ENCODE measurements at regions of chr19 and their contacts with region 1.

Region 1: DNA sequence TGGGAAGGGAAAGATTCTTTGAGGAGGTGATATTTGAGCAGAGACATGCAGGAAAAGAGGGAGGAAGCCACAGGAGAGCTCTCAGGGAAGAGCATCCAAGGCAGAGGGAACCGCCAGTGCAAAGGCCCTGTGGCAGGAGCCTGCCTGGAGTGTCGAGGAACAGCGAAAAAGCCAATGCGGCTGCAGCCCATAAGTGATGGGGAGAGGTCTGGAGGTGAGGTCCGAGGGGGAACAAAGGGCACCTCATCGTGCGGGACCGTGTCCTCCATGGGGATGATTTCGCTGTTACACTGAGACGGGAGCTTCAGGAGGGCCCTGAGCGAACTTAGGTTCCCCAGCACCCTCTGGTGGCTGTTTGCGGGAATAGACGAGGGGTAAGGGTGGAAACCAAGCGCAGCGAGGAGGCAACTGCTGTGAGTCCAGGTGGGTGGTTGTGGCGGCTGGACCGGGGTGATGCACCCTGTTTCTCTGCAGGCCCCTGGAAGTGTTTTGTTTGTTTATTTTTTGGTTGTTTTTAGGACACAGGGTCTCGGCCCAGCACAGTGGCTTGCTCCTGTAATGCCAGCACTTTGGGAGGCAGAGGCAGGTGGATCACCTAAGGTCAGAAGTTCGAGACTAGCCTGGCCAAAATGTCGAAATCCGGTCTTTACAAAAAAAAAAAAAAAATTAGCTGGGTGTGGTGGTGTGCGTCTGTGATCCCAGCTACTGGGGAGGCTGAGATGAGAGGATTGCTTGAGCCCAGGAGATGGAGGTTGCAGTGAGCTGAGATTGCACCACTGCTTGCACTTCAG is 5.9 kb upstream of the EHD2 start:
- DNase-seq: peak; percentile 71 to 89 (median 81)
- H3K4me3 ChIP-seq: no peak overlapping the region
- H3K27ac ChIP-seq: no peak overlapping the region
- H3K4me1 ChIP-seq: no peaks in the 10 kb centered on the region
- H3K27me3 ChIP-seq: no peaks in the 10 kb centered on the region
- CTCF ChIP-seq: peak; percentile 67 to 89 (median 82)
- POLR2A ChIP-seq: no peak

Region 2: GRCh38 chr19:47531640-47532387 is 175.5 kb before region 1 on chr19:
- intact Hi-C with region 1: loop called in 1 of 2 experiments (anchors 10 kb)
- DNase-seq: no peak
- H3K4me3 ChIP-seq: no peak overlapping the region
- H3K27ac ChIP-seq: no peak overlapping the region
- H3K4me1 ChIP-seq: no peaks in the 10 kb centered on the region
- H3K27me3 ChIP-seq: no peaks in the 10 kb centered on the region
- CTCF ChIP-seq: no peak
- POLR2A ChIP-seq: no peak

Region 3: DNA sequence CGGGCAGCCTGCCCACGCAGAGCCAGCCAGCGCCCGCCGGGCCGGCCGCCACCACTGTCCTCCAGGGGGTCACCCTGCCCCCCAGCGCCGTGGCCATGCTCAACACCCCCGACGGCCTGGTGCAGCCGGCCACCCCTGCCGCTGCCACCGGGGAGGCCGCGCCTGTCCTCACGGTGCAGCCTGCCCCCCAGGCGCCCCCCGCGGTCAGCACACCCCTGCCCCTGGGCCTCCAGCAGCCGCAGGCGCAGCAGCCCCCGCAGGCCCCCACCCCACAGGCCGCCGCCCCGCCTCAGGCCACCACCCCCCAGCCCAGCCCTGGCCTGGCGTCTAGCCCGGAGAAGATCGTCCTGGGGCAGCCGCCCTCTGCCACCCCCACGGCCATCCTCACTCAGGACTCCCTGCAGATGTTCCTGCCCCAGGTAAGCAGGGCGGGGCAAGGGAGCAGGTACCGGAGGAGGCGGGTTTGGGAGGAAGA is 26.4 kb before region 1 on chr19:
- intact Hi-C with region 1: no loop called
- DNase-seq: no peak
- H3K4me3 ChIP-seq: no peak overlapping the region
- H3K27ac ChIP-seq: no peak overlapping the region
- H3K4me1 ChIP-seq: no peaks in the 10 kb centered on the region
- H3K27me3 ChIP-seq: no peaks in the 10 kb centered on the region
- CTCF ChIP-seq: no peak
- POLR2A ChIP-seq: no peak

Measured in adrenal gland (tissue), 19 donors.